ENCODE measurements at regions of chr17 and their contacts with region 1.

Region 1: GRCh38 chr17:39461113-39461925 is at the start of gene CDK12:
- DNase-seq: peak; percentile 99
- H3K4me3 ChIP-seq: peak within 1 kb of the TSS; percentile 62 to 93 (median 83)
- H3K27ac ChIP-seq: peak within 1 kb of the TSS; percentile 94
- H3K4me1 ChIP-seq: peaks cover 15% of the 10 kb centered on the region
- H3K27me3 ChIP-seq: no peaks in the 10 kb centered on the region
- CTCF ChIP-seq: no peak
- POLR2A ChIP-seq: peak; percentile 95
- total RNA-seq, gene CDK12: 53.9 and 55.4 TPM in 2 replicates

Region 2: GRCh38 chr17:39450847-39451581 is 10.3 kb before region 1 on chr17 and contains the start of gene MED1:
- CTCF ChIA-PET with region 1: interaction called, 35 read pairs
- POLR2A ChIA-PET with region 1: interaction called, 45 read pairs
- dilution Hi-C with region 1: no loop called
- intact Hi-C with region 1: loop called (anchors 1 kb)
- DNase-seq: peak; percentile 98
- H3K4me3 ChIP-seq: peak within 1 kb of the TSS; percentile 72 to 94 (median 88)
- H3K27ac ChIP-seq: peak within 1 kb of the TSS; percentile 84
- H3K4me1 ChIP-seq: peaks cover 12% of the 10 kb centered on the region
- H3K27me3 ChIP-seq: no peaks in the 10 kb centered on the region
- CTCF ChIP-seq: no peak
- POLR2A ChIP-seq: peak; percentile 80
- total RNA-seq, gene MED1: 39.8 and 46.2 TPM in 2 replicates

Region 3: GRCh38 chr17:39527220-39527813 is 66.0 kb after region 1 on chr17:
- CTCF ChIA-PET with region 1: no interaction called
- POLR2A ChIA-PET with region 1: no interaction called
- dilution Hi-C with region 1: no loop called
- intact Hi-C with region 1: no loop called
- DNase-seq: peak; percentile 56
- H3K4me3 ChIP-seq: no peak overlapping the region
- H3K27ac ChIP-seq: no peak overlapping the region
- H3K4me1 ChIP-seq: peaks cover 9% of the 10 kb centered on the region
- H3K27me3 ChIP-seq: no peaks in the 10 kb centered on the region
- CTCF ChIP-seq: peak; percentile 36 to 49
- POLR2A ChIP-seq: no peak

Measured in endothelial cell of umbilical vein (primary cell).